ENCODE measurements at regions of chr6 and their contacts with region 1.

Region 1: DNA sequence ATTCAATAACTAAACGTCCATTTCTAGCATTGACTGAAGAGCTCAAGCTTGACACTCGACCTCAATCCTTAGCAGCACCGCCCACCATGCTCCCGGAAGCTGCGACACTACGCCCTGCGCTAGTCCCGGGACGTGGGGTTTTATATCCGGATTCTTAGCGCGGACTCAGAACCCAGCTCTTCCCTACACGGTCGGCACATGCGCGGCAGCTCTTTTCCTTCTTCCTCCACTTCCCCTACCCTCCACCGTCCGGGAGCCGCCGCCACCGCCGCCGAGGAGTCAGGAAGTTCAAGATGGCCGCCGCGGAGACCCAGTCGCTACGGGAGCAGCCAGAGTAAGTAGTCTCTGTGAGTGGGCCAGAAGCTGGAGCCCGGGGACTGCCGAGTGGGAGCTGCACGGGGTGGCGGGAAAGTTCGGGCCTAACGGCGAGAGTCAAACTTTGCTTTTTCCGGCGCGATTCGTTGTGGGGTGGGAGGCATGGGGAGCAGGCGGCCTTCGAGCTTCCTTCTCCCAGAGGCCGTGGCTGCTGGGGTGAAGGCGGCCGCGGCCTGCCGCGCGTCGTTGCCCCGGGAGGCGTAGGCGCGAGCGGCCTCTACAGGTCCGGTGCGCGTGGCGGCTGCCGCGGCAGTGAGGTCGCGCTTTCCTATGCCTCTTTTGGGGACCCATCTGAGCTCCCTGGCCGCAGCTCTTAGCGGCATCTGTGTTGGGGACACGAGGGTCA is 57.6 kb downstream of the FAM217A start:
- DNase-seq: peak; percentile 95 to 97 (median 96)
- ATAC-seq: peak; percentile 87 to 94 (median 91)
- H3K4me3 ChIP-seq: peak overlapping the region; percentile 55 to 94 (median 86)
- H3K27ac ChIP-seq: peak overlapping the region; percentile 86 to 99 (median 98)
- H3K4me1 ChIP-seq: peaks cover 9 to 75% (median 57%) of the 10 kb centered on the region in 12 donors
- H3K27me3 ChIP-seq: no peaks in the 10 kb centered on the region
- CTCF ChIP-seq: peak in 10 of 12 donors; percentile 7 to 61 (median 31)
- POLR2A ChIP-seq: peak in 1 of 2 donors; percentile 63

Region 2: GRCh38 chr6:4135665-4136353 is 114.5 kb after region 1 on chr6:
- intact Hi-C with region 1: loop called in 2 of 10 experiments (anchors 5 to 10 kb)
- DNase-seq: peak; percentile 98 to 99 (median 99)
- ATAC-seq: peak; percentile 94 to 98 (median 96)
- H3K4me3 ChIP-seq: peak overlapping the region; percentile 46 to 97 (median 78)
- H3K27ac ChIP-seq: peak overlapping the region; percentile 13 to 96 (median 88)
- H3K4me1 ChIP-seq: peaks cover 0 to 31% (median 17%) of the 10 kb centered on the region in 12 donors
- H3K27me3 ChIP-seq: no peaks in the 10 kb centered on the region
- CTCF ChIP-seq: no peak
- POLR2A ChIP-seq: peak in 1 of 2 donors; percentile 65